B cell (primary cell): ENCODE measurements at regions of chr20 and their contacts with region 1.

Region 1: GRCh38 chr20:1466211-1467081 is at the start of gene NSFL1C:
- DNase-seq: peak; percentile 97
- ATAC-seq: peak; percentile 92
- H3K4me3 ChIP-seq: peak within 1 kb of the TSS; percentile 69 to 92 (median 90)
- H3K4me3 Mint-ChIP-seq: peak within 1 kb of the TSS; percentile 90
- H3K27ac ChIP-seq: peak within 1 kb of the TSS; percentile 79 to 92
- H3K27ac Mint-ChIP-seq: peak within 1 kb of the TSS; percentile 93
- H3K4me1 ChIP-seq: peaks cover 49 to 54% of the 10 kb centered on the region in 2 donors
- H3K4me1 Mint-ChIP-seq: peaks cover 69% of the 10 kb centered on the region
- H3K27me3 ChIP-seq: no peaks in the 10 kb centered on the region
- H3K27me3 Mint-ChIP-seq: no peaks in the 10 kb centered on the region
- CTCF ChIP-seq: peak; percentile 100
- total RNA-seq, gene NSFL1C: 80.3 and 84.0 TPM in 2 replicates

Region 2: GRCh38 chr20:833450-834150 is 632.8 kb before region 1 on chr20 and contains the start of gene FAM110A:
- CTCF ChIA-PET with region 1: no interaction called
- POLR2A ChIA-PET with region 1: interaction called, 3 read pairs
- intact Hi-C with region 1: loop called (anchors 2 kb)
- DNase-seq: peak; percentile 98
- ATAC-seq: peak; percentile 93
- H3K4me3 ChIP-seq: peak within 1 kb of the TSS; percentile 72 to 95 (median 88)
- H3K4me3 Mint-ChIP-seq: peak within 1 kb of the TSS; percentile 81
- H3K27ac ChIP-seq: peak within 1 kb of the TSS; percentile 81 to 96
- H3K27ac Mint-ChIP-seq: peak within 1 kb of the TSS; percentile 87
- H3K4me1 ChIP-seq: peaks cover 31% of the 10 kb centered on the region in 2 donors
- H3K4me1 Mint-ChIP-seq: peaks cover 37% of the 10 kb centered on the region
- H3K27me3 ChIP-seq: no peaks in the 10 kb centered on the region
- H3K27me3 Mint-ChIP-seq: no peaks in the 10 kb centered on the region
- CTCF ChIP-seq: no peak
- total RNA-seq, gene FAM110A: 18.4 and 19.6 TPM in 2 replicates

Region 3: GRCh38 chr20:1225783-1226654 is 240.4 kb before region 1 on chr20 and contains the start of gene RAD21L1:
- CTCF ChIA-PET with region 1: no interaction called
- POLR2A ChIA-PET with region 1: no interaction called
- intact Hi-C with region 1: loop called (anchors 10 kb)
- DNase-seq: peak; percentile 77
- ATAC-seq: peak; percentile 84
- H3K4me3 ChIP-seq: peak within 1 kb of the TSS in 4 of 5 experiments; percentile 46 to 61 (median 56)
- H3K4me3 Mint-ChIP-seq: peak within 1 kb of the TSS; percentile 83
- H3K27ac ChIP-seq: no peak within 1 kb of the TSS
- H3K27ac Mint-ChIP-seq: no peak within 1 kb of the TSS
- H3K4me1 ChIP-seq: peaks cover 16 to 17% of the 10 kb centered on the region in 2 donors
- H3K4me1 Mint-ChIP-seq: peaks cover 16% of the 10 kb centered on the region
- H3K27me3 ChIP-seq: peaks cover 1 to 34% (median 25%) of the 10 kb centered on the region in 4 experiments
- H3K27me3 Mint-ChIP-seq: peaks cover 31% of the 10 kb centered on the region
- CTCF ChIP-seq: no peak
- total RNA-seq, gene RAD21L1: not detected in 2 replicates

Region 4: GRCh38 chr20:1392823-1393506 is 73.5 kb before region 1 on chr20 and contains the start of gene FKBP1A:
- CTCF ChIA-PET with region 1: interaction called, 10 read pairs
- POLR2A ChIA-PET with region 1: interaction called, 15 read pairs
- intact Hi-C with region 1: loop called (anchors 1 kb)
- DNase-seq: peak; percentile 97
- ATAC-seq: peak; percentile 88
- H3K4me3 ChIP-seq: peak within 1 kb of the TSS; percentile 66 to 93 (median 76)
- H3K4me3 Mint-ChIP-seq: peak within 1 kb of the TSS; percentile 100
- H3K27ac ChIP-seq: peak within 1 kb of the TSS; percentile 82 to 84
- H3K27ac Mint-ChIP-seq: peak within 1 kb of the TSS; percentile 100
- H3K4me1 ChIP-seq: peaks cover 64 to 66% of the 10 kb centered on the region in 2 donors
- H3K4me1 Mint-ChIP-seq: peaks cover 83% of the 10 kb centered on the region
- H3K27me3 ChIP-seq: no peaks in the 10 kb centered on the region
- H3K27me3 Mint-ChIP-seq: no peaks in the 10 kb centered on the region
- CTCF ChIP-seq: no peak
- total RNA-seq, gene FKBP1A: 86.5 and 86.7 TPM in 2 replicates

Region 5: GRCh38 chr20:1776681-1777475 is 310.4 kb after region 1 on chr20:
- CTCF ChIA-PET with region 1: interaction called, 10 read pairs
- POLR2A ChIA-PET with region 1: no interaction called
- intact Hi-C with region 1: no loop called
- DNase-seq: peak; percentile 87
- ATAC-seq: peak; percentile 92
- H3K4me3 ChIP-seq: peak overlapping the region in 4 of 5 experiments; percentile 64 to 95 (median 74)
- H3K4me3 Mint-ChIP-seq: peak overlapping the region; percentile 93
- H3K27ac ChIP-seq: peak overlapping the region; percentile 32 to 66
- H3K27ac Mint-ChIP-seq: peak overlapping the region; percentile 65
- H3K4me1 ChIP-seq: peaks cover 11 to 13% of the 10 kb centered on the region in 2 donors
- H3K4me1 Mint-ChIP-seq: peaks cover 16% of the 10 kb centered on the region
- H3K27me3 ChIP-seq: peaks cover 0 to 10% (median 2%) of the 10 kb centered on the region in 4 experiments
- H3K27me3 Mint-ChIP-seq: peaks cover 16% of the 10 kb centered on the region
- CTCF ChIP-seq: peak; percentile 78

Region 6: DNA sequence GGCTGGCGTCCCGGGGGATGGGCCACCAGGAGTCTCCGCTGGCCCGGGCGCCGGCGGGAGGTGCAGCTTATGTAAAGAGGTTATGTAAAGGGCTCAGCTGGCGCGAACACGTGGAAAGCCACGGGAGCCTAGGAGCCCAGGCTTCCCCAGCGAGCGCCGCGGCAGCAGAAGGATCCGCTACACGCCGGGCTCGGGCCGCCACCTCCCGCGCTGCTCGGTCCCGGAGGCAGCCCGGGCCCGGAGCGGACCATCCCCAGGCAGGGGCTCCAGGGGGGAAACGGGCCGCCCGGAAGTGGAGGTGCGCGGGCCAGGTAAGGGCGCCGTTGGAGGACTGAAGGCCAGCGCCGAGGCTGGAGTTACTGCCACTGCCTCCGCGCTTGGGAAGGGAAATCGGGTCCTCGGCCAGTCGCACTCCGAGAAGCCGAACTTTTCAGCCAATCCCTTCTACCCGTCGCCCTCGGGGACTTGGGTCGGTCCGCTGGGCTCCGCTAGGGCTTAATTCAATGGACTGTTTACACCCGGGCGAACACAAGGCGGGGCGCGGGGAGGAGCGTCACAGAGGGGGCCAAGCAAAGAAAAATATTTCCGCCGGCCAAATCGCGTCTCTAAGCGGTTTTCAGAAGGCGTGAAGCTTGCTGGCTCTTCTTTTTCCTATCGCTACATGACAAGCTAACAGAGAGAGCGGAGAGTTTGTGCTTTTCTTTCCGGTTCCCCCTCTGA is 635.6 kb after region 1 on chr20:
- CTCF ChIA-PET with region 1: no interaction called
- POLR2A ChIA-PET with region 1: no interaction called
- intact Hi-C with region 1: loop called (anchors 2 kb)
- DNase-seq: peak; percentile 98
- ATAC-seq: peak; percentile 79
- H3K4me3 ChIP-seq: peak overlapping the region; percentile 71 to 92 (median 83)
- H3K4me3 Mint-ChIP-seq: peak overlapping the region; percentile 96
- H3K27ac ChIP-seq: peak overlapping the region; percentile 100
- H3K27ac Mint-ChIP-seq: peak overlapping the region; percentile 100
- H3K4me1 ChIP-seq: peaks cover 28 to 32% of the 10 kb centered on the region in 2 donors
- H3K4me1 Mint-ChIP-seq: peaks cover 44% of the 10 kb centered on the region
- H3K27me3 ChIP-seq: no peaks in the 10 kb centered on the region
- H3K27me3 Mint-ChIP-seq: no peaks in the 10 kb centered on the region
- CTCF ChIP-seq: no peak